ENCODE measurements at regions of chr1 and their contacts with region 1.

Region 1: DNA sequence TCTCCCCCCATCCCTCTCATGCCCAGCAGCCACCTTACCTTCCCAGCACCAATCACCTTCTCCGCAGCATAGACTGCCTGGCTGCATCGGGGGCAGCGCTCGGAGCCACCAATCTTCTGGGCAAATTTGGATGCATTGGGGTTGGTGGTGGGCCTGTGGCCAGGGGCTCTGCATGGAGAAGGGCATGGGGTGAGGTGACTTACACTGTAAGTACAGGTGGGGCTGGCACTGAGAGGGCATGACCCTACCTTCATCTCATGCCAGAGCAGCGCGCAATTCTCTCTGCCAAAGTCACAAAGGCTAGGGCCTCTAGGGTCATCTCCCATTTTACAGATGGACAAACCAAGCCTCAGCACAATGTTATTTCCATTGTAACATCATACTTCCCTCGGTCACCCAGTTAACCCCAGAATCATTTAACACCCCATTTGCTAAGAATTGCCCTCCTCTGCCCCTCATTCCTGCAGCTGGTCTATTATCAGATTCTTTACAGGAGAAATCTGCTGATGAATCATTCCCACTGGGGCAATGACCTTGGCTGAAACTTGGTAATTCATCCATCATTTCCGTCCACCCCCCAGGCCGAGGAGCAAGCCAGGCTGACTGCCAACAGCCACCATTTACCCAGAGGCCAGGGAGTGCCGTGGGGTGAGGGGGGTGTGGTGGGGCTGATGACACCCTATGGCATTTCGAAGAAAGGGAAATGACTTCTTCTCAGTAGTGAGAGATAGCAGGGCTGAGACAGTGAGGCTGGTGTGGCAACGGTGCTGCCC is 17.9 kb downstream of the CSRP1 start:
- DNase-seq: peak; percentile 68
- ATAC-seq: peak; percentile 87
- H3K4me3 ChIP-seq: 0 out of 4 replicates have a peak overlapping the region, but pooled peaks of 1 of the 2 experiments have one; percentile 7
- H3K27ac ChIP-seq: peak overlapping the region; percentile 25; the same call in 1 of the 2 replicates
- H3K4me1 ChIP-seq: peaks cover 13 to 20% of the 10 kb centered on the region in 2 experiments; a peak in 3 of 4 replicates
- H3K27me3 ChIP-seq: no peaks in the 10 kb centered on the region
- CTCF ChIP-seq: no peak
- POLR2A ChIP-seq: no peak
- RAD21 ChIP-seq: no peak

Region 2: DNA sequence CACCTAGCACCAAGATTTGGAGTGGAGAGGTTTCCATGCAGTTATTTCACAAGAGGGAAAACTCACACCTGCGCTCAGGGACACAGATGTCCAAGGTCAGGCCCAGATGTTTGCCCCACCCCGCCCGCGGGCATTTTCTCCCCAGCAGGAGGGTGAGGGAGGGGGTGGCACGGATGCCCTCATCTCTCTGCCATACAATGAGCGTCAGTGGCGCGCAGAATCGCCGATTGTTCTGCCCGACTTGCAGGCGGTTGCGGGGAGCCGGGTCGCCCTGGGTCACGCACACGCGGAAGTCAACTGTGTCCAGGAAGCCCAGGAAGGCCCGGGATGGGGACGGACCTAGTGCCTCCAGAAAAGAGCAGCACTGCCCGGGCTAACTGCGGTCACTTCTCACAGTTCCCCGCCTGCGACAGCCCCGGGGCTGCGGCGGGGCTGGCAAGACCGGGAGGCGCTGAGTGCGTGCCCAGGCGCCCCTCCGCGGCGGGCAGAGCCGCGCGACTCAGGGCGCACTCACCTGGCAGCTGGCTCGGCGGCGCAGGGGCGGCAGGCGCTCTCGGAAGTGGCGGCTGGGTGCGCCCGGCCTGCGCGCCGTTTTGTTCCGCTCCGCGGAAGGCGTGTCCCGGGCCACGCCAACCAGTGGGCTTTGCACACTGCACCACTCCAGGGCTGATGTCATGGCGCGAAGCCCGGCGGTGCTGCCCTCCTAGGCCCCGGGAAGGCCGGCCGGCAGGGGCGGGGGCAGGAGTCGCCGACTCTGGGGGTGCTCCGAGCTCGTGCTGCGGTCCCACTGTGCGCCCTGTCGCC is 17.8 kb after region 1 on chr1 and contains the start of gene CSRP1:
- CTCF ChIA-PET with region 1: interaction called, 194 read pairs
- POLR2A ChIA-PET with region 1: interaction called, 3 read pairs
- RAD21 ChIA-PET with region 1: no interaction called
- intact Hi-C with region 1: loop called (anchors 2 kb)
- DNase-seq: peak; percentile 71
- ATAC-seq: peak; percentile 95
- H3K4me3 ChIP-seq: peak within 1 kb of the TSS; percentile 64 to 73
- H3K27ac ChIP-seq: peak within 1 kb of the TSS; percentile 64
- H3K4me1 ChIP-seq: peaks cover 11 to 27% of the 10 kb centered on the region in 2 experiments
- H3K27me3 ChIP-seq: no peaks in the 10 kb centered on the region
- CTCF ChIP-seq: no peak
- POLR2A ChIP-seq: peak; percentile 96
- RAD21 ChIP-seq: peak; percentile 18
- total RNA-seq, gene CSRP1: 51.7 TPM

Measured in HCT116 (cell line).